Esophagus squamous epithelium (tissue), 5 donors: ENCODE measurements at regions of chr7 and their contacts with region 1.

Region 1: DNA sequence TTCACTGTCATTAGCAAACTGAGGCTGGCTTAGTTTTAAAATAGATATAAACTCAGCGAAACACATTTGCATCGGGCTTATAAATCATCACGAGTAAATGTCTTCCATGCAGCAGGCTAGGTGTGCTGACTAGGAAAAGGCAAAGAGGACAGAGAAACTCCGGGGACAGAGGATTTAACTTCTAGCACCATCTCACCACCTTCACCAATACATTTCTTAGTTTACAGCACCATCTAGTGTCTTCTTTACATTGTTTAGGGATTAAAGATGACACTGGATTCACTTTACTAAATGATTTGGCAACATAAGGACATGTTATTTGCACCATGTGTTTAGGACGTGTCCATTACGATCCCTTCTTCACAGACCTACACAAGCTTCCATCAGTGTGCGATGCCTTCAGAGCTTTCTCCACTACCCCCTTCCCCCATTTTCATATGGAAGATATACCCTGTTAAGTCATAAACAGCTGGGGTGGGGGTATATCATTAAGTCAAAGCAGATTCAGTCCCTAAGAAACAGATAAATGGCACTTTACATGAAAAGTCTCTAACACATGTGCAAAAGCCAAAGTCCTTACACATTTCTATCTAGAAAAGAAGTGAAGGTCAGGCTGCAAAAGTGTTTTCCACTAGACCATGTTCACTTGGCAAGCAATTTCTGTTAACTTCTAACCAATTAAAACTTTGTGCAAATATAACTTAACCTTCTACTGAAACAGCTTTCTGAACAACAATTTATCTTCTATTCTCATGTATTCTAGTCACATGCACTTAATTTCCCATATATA is 103.3 kb downstream of the GRB10 start:
- DNase-seq: no peak
- H3K4me3 ChIP-seq: no peak overlapping the region
- H3K27ac ChIP-seq: no peak overlapping the region
- H3K4me1 ChIP-seq: peaks cover 0 to 44% (median 18%) of the 10 kb centered on the region in 3 donors
- H3K27me3 ChIP-seq: no peaks in the 10 kb centered on the region
- CTCF ChIP-seq: peak in 4 of 6 experiments; percentile 9 to 46 (median 20)
- POLR2A ChIP-seq: no peak

Region 2: DNA sequence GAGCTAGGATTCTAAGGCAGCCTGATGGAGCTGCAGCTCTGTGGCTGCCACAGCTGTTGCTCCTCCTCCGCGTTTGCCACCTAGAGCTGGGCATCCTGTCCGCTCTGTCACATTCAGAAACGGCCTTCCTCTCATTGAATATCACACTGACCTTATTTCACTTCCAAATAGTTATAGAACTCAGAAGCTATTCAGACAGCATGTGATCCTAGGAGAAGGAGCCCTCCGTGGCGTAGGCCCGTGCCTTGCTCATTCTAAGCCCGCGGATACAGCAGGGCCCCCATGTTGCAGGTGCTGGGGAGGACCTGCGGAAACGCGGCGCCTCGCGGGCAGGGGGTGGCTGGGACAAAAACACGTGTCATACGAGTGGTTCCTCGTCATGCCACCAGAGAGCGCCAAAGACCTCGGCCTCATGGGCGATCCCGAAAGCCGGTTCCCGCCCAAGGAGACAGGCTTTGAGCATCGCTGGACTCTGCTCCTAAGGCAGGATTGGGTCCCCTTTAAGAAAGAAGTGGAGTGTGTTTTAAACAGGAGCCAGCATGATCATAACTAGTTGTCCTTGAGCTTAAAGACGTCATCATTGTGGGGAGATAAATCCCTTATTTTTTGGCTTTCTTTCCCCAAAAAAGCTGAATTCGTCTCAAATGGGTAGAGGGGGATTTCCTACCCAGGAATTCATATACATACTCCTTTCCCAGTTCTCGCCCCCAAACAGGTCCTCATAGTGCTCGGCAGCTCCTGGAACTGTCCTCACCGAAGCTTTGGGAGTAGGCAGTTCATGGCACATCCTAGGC is 211.4 kb before region 1 on chr7:
- intact Hi-C with region 1: loop called (anchors 5 kb)
- DNase-seq: peak; percentile 25
- H3K4me3 ChIP-seq: peak overlapping the region in 1 of 4 donors; percentile 50
- H3K27ac ChIP-seq: no peak overlapping the region
- H3K4me1 ChIP-seq: peaks cover 0 to 8% (median 0%) of the 10 kb centered on the region in 3 donors
- H3K27me3 ChIP-seq: no peaks in the 10 kb centered on the region
- CTCF ChIP-seq: peak; percentile 79 to 93 (median 88)
- POLR2A ChIP-seq: no peak

Region 3: DNA sequence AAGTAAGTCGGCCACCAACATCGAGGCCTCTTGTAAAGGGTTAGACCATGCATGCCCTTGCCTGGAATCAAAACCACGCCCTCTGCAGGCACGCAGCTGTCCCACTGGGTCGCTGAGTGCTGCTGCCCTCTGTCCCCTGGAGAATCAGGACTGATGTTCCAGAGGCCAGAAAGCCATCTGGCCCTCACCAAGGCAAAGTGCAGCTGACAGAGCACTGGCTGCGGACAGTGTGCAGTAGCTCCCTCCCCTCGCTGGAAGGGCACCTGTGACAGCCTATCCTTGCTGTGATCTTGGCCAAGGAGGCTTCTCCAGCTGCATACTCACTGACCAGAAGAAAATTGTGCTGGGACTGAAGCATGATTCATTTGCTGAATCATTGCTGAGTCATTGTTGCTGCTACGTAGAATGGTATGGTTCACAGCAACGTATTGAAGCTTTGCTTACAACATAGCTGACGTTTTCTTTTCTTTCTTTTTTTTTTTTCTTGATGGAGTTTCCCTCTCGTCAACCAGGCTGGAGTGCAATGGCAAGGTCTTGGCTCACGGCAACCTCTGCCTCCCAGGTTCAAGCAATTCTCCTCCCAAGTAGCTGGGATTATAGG is 144.6 kb before region 1 on chr7:
- intact Hi-C with region 1: no loop called
- DNase-seq: no peak
- H3K4me3 ChIP-seq: no peak overlapping the region
- H3K27ac ChIP-seq: no peak overlapping the region
- H3K4me1 ChIP-seq: peaks cover 0 to 17% (median 3%) of the 10 kb centered on the region in 3 donors
- H3K27me3 ChIP-seq: peaks cover 0 to 7% (median 0%) of the 10 kb centered on the region in 4 donors
- CTCF ChIP-seq: no peak
- POLR2A ChIP-seq: no peak

Region 4: DNA sequence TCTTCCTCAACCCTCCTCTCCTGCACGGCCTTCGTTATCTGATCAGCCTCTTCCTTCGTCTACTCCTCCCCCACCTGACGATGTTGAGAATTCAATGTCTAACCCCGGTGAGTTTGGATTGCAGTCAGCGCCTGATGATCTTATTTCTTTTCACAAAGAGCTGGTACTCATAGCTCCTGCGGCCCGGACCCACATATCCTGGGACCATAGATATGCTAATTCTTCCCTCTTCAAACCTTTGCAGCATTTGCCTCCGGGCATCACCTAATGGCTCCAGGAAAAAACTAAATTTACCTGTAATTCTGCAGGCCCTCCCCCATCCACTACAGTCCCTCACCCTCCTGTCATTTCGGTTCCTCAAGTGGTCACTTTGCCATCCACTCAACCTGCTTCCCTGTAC is 101.8 kb before region 1 on chr7:
- intact Hi-C with region 1: no loop called
- DNase-seq: no peak
- H3K4me3 ChIP-seq: no peak overlapping the region
- H3K27ac ChIP-seq: no peak overlapping the region
- H3K4me1 ChIP-seq: no peaks in the 10 kb centered on the region
- H3K27me3 ChIP-seq: no peaks in the 10 kb centered on the region
- CTCF ChIP-seq: no peak
- POLR2A ChIP-seq: no peak

Region 5: GRCh38 chr7:50739744-50740435 is 60.5 kb after region 1 on chr7:
- intact Hi-C with region 1: no loop called
- DNase-seq: no peak
- H3K4me3 ChIP-seq: no peak overlapping the region
- H3K27ac ChIP-seq: peak overlapping the region in 1 of 4 donors; percentile 3
- H3K4me1 ChIP-seq: peaks cover 0 to 20% (median 0%) of the 10 kb centered on the region in 3 donors
- H3K27me3 ChIP-seq: no peaks in the 10 kb centered on the region
- CTCF ChIP-seq: no peak
- POLR2A ChIP-seq: no peak